Motor neuron (in vitro differentiated cells): ENCODE measurements at regions of chr11 and their contacts with region 1.

Region 1: GRCh38 chr11:43376594-43376993 is 17.9 kb downstream of the TTC17 start:
- ATAC-seq: peak in 3 of 8 experiments; percentile 59 to 97 (median 95)
- H3K4me3 ChIP-seq: no peak overlapping the region
- H3K27ac ChIP-seq: no peak overlapping the region
- H3K4me1 ChIP-seq: no peaks in the 10 kb centered on the region

Region 2: DNA sequence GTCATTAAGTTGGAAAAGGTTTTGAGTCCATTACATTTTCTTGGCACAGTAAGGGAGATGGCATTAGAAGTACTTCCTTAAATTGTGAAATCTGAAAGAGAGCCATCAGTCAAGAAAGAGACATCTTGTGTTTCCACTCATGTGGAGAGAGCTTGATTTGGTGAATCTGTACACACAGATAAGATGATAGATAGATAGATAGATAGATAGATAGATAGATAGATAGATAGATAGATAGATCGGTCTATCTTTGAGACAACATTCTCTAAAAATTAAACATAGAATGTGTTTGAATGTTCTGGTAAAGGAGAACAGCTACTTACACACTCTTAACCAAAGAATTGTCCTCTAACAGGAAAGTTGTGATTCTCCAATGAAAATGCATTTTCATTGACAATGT is 58.3 kb after region 1 on chr11:
- in situ Hi-C with region 1: loop called in 1 of 9 experiments (anchors 10 kb)
- ATAC-seq: no peak
- H3K4me3 ChIP-seq: no peak overlapping the region
- H3K27ac ChIP-seq: no peak overlapping the region
- H3K4me1 ChIP-seq: no peaks in the 10 kb centered on the region

Region 3: GRCh38 chr11:43614214-43614613 is 237.6 kb after region 1 on chr11:
- in situ Hi-C with region 1: no loop called
- ATAC-seq: no peak
- H3K4me3 ChIP-seq: no peak overlapping the region
- H3K27ac ChIP-seq: no peak overlapping the region
- H3K4me1 ChIP-seq: no peaks in the 10 kb centered on the region